ENCODE measurements at regions of chr14 and their contacts with region 1.

Region 1: DNA sequence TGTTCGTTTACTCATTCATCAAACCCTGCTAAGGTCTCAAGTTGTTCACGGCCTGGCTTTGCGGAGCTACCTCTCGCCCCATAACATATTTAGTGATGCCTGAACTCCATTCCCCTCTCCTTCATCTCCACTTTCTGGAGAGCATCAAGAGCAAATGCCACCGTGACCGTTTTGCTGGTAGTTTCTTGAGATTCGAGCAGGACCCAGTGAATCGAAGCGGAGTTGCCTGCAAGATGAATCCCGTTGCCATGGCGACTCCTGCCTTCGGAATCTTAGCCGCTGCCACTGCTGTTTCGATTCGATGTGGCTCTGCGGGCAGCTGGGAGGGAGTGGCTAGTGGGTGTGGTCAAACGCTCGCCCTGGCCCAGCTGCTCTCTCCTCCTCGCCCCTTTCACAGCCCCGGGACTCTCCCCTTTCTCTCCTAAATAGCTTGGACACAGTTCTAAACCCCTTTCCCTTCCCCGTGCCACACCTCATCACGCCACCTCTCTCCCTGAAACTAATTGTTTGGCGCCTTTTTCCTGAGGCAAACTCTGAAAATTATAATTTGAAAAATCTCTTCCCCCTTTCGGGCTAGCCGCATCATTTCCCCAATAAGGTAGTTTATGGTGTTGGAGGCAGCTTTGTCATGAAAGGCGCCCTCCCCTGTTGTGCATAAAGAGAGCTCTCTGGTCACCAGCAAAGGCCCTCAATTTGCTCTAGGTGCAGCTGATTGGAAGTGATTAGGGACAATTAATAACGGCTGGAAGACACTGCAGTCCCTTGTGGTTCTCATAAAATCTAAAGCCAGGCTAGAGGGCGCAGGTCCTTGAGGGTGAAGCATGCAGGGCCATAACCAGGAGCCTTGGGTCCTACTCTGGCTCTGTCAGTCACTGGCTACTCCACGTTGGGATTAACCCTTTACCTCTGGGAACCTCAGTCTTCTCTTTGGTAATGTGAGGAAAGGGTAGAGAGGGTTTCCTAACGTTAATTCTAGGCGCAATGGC is 1.6 kb downstream of the DAAM1 start:
- DNase-seq: peak; percentile 86
- H3K4me3 Mint-ChIP-seq: peak overlapping the region; percentile 93
- H3K27ac Mint-ChIP-seq: peak overlapping the region; percentile 49
- H3K4me1 Mint-ChIP-seq: peaks cover 6% of the 10 kb centered on the region
- H3K27me3 Mint-ChIP-seq: peaks cover 3% of the 10 kb centered on the region

Region 2: GRCh38 chr14:59228421-59228820 is 38.3 kb after region 1 on chr14:
- CTCF ChIA-PET with region 1: no interaction called
- POLR2A ChIA-PET with region 1: no interaction called
- intact Hi-C with region 1: no loop called
- DNase-seq: no peak
- H3K4me3 Mint-ChIP-seq: no peak overlapping the region
- H3K27ac Mint-ChIP-seq: no peak overlapping the region
- H3K4me1 Mint-ChIP-seq: peaks cover 19% of the 10 kb centered on the region
- H3K27me3 Mint-ChIP-seq: no peaks in the 10 kb centered on the region

Region 3: DNA sequence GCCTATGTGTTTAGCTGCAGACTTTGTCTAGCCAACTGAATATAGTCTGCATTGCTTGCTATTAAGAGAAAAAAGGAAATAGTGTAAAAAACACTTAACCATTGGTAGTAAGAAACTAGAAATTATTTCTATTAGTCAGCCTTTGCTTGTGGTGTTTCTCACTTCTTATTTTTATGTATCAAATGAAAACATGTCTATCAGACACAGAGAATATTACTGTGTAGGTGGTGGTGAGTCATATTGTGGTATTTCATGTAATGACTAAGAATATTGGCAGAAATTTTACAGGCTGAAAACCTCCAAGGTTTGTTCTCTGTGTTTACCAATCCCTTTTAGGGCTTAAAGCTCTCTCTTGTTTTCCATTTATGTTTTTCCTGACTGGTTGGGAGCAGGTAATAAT is 85.6 kb after region 1 on chr14:
- CTCF ChIA-PET with region 1: interaction called, 3 read pairs
- POLR2A ChIA-PET with region 1: no interaction called
- intact Hi-C with region 1: loop called (anchors 2 kb)
- DNase-seq: no peak
- H3K4me3 Mint-ChIP-seq: no peak overlapping the region
- H3K27ac Mint-ChIP-seq: no peak overlapping the region
- H3K4me1 Mint-ChIP-seq: peaks cover 22% of the 10 kb centered on the region
- H3K27me3 Mint-ChIP-seq: no peaks in the 10 kb centered on the region

Region 4: GRCh38 chr14:59301354-59301753 is 111.3 kb after region 1 on chr14:
- CTCF ChIA-PET with region 1: no interaction called
- POLR2A ChIA-PET with region 1: no interaction called
- intact Hi-C with region 1: loop called (anchors 10 kb)
- DNase-seq: peak; percentile 47
- H3K4me3 Mint-ChIP-seq: no peak overlapping the region
- H3K27ac Mint-ChIP-seq: no peak overlapping the region
- H3K4me1 Mint-ChIP-seq: peaks cover 20% of the 10 kb centered on the region
- H3K27me3 Mint-ChIP-seq: no peaks in the 10 kb centered on the region

Region 5: GRCh38 chr14:59464486-59465315 is 274.6 kb after region 1 on chr14:
- CTCF ChIA-PET with region 1: no interaction called
- POLR2A ChIA-PET with region 1: interaction called, 4 read pairs
- intact Hi-C with region 1: loop called (anchors 5 kb)
- DNase-seq: peak; percentile 61
- H3K4me3 Mint-ChIP-seq: peak overlapping the region; percentile 81
- H3K27ac Mint-ChIP-seq: no peak overlapping the region
- H3K4me1 Mint-ChIP-seq: peaks cover 3% of the 10 kb centered on the region
- H3K27me3 Mint-ChIP-seq: peaks cover 4% of the 10 kb centered on the region